ENCODE measurements at regions of chr17 and their contacts with region 1.

Region 1: GRCh38 chr17:78840725-78841611 is at the start of gene USP36:
- DNase-seq: peak; percentile 99
- H3K4me3 Mint-ChIP-seq: peak within 1 kb of the TSS; percentile 93
- H3K27ac Mint-ChIP-seq: peak within 1 kb of the TSS; percentile 90
- H3K4me1 Mint-ChIP-seq: peaks cover 28% of the 10 kb centered on the region
- H3K27me3 Mint-ChIP-seq: no peaks in the 10 kb centered on the region
- CTCF ChIP-seq: peak; percentile 5
- total RNA-seq, gene USP36: 118 and 119 TPM in 2 replicates

Region 2: GRCh38 chr17:78497115-78497540 is 343.8 kb before region 1 on chr17:
- CTCF ChIA-PET with region 1: no interaction called
- POLR2A ChIA-PET with region 1: no interaction called
- intact Hi-C with region 1: loop called (anchors 1 kb)
- DNase-seq: peak; percentile 84
- H3K4me3 Mint-ChIP-seq: no peak overlapping the region
- H3K27ac Mint-ChIP-seq: no peak overlapping the region
- H3K4me1 Mint-ChIP-seq: no peaks in the 10 kb centered on the region
- H3K27me3 Mint-ChIP-seq: no peaks in the 10 kb centered on the region
- CTCF ChIP-seq: peak; percentile 73

Region 3: DNA sequence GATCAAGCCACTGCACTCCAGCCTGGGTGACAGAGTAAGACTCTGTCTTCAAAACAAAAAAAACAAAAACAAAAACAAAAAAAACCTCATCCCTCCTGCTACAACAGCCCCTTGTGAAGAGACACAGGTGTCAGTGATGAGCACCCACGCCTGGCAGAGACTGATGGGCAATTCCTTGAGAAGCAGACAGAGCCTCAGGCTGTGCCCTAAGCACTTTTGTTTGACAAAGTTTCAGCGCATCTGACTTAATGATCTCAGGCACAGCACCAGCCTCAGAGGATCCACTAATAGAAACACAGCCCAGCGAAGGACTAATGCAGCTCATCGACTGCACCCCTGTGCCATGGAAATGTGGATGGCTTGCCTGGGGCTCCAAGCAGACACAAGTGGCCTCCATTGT is 19.2 kb after region 1 on chr17:
- CTCF ChIA-PET with region 1: interaction called, 5 read pairs
- POLR2A ChIA-PET with region 1: interaction called, 15 read pairs
- intact Hi-C with region 1: loop called (anchors 2 kb)
- DNase-seq: no peak
- H3K4me3 Mint-ChIP-seq: no peak overlapping the region
- H3K27ac Mint-ChIP-seq: no peak overlapping the region
- H3K4me1 Mint-ChIP-seq: peaks cover 17% of the 10 kb centered on the region
- H3K27me3 Mint-ChIP-seq: no peaks in the 10 kb centered on the region
- CTCF ChIP-seq: no peak

Region 4: GRCh38 chr17:78865682-78866390 is 24.9 kb after region 1 on chr17:
- CTCF ChIA-PET with region 1: interaction called, 3 read pairs
- POLR2A ChIA-PET with region 1: interaction called, 15 read pairs
- intact Hi-C with region 1: loop called (anchors 2 kb)
- DNase-seq: peak; percentile 83
- H3K4me3 Mint-ChIP-seq: no peak overlapping the region
- H3K27ac Mint-ChIP-seq: no peak overlapping the region
- H3K4me1 Mint-ChIP-seq: peaks cover 29% of the 10 kb centered on the region
- H3K27me3 Mint-ChIP-seq: no peaks in the 10 kb centered on the region
- CTCF ChIP-seq: peak; percentile 91

Region 5: DNA sequence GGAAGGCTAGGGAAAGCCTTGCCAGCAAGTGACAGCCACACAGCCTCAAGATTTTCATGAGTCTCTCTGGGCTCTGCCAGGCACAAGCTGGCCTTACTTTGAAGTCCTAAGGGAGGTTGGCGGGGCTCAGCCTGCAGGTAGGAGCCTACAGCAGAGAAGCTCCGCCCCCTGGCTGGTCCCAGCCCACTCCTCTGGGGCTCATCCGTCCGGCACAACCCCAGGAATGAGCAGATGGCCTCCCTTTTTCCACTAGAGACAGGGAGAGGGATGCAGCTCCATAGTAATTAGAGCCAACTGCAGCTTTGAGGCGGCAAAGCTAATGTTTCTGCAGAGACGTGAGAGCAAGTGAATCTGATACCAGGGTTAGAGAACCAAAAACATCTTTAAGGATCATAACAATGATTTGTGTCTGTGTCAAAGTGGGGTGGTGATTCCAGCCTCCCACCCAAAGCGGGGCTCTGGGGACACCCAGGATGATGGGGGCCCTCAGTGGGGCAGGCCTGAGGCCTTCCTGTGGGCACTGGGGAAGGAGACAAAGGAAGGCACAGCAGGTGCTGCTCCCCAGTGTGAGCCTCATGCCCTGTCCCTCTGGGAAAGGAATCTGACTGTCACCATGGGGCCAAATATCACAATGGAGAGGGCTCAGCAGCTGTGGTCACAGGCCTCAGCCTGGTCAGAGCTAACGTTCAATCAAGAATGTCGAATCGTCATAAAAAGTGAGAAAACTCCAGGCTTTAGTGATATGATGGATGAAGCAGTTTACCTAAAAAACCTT is 708.4 kb after region 1 on chr17:
- CTCF ChIA-PET with region 1: no interaction called
- POLR2A ChIA-PET with region 1: no interaction called
- intact Hi-C with region 1: no loop called
- DNase-seq: no peak
- H3K4me3 Mint-ChIP-seq: no peak overlapping the region
- H3K27ac Mint-ChIP-seq: no peak overlapping the region
- H3K4me1 Mint-ChIP-seq: no peaks in the 10 kb centered on the region
- H3K27me3 Mint-ChIP-seq: peaks cover 77% of the 10 kb centered on the region
- CTCF ChIP-seq: no peak